Mammary epithelial cell (primary cell): ENCODE measurements at regions of chr1 and their contacts with region 1.

Region 1: DNA sequence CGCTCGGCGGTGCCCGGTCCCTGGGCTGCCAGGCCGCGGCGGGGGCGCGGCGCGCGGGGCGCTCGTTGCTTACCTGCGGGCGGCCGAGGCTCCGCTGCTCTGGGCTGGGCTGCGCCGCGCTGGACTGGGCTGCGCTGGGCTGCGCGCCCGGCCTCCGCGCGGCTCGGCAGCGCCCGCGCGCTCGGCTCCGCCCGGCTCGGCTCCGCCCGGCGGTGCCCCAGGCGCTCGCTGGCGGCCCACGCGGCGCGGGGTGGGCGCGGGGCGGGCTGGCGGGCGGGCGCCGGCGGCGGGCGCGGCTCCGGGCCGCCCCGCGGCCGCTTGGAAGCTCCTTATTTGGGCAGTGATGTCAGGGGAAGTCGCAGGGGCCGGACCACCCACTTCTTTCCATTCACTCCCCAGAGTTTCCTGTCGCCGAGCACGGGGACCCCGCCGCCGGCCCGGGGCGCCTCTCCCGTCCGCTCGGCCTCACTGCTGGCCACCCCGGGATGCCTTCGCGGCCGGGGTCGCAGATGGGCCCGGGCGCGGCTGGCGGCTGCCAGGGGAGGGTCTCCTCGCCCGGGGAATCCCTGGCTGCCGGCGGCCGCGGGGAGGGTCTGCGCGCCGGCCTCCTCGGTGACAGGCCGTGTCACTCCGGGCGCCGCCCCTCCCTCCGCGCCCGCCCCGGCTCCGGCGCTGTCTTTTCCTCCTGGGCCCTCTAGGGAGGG is 177.7 kb upstream of the EDN2 start:
- DNase-seq: peak; percentile 33
- H3K4me3 ChIP-seq: peak overlapping the region; percentile 17 to 67 (median 62)
- H3K27ac ChIP-seq: peak overlapping the region; percentile 28
- H3K4me1 ChIP-seq: peaks cover 44% of the 10 kb centered on the region
- H3K27me3 ChIP-seq: no peaks in the 10 kb centered on the region
- CTCF ChIP-seq: no peak

Region 2: GRCh38 chr1:41704196-41704595 is 42.0 kb after region 1 on chr1:
- CTCF ChIA-PET with region 1: no interaction called
- dilution Hi-C with region 1: loop called (anchors 5 kb)
- in situ Hi-C with region 1: no loop called
- intact Hi-C with region 1: no loop called
- DNase-seq: no peak
- H3K4me3 ChIP-seq: no peak overlapping the region
- H3K27ac ChIP-seq: no peak overlapping the region
- H3K4me1 ChIP-seq: no peaks in the 10 kb centered on the region
- H3K27me3 ChIP-seq: no peaks in the 10 kb centered on the region
- CTCF ChIP-seq: no peak

Region 3: GRCh38 chr1:41783189-41783639 is 121.0 kb after region 1 on chr1:
- CTCF ChIA-PET with region 1: no interaction called
- dilution Hi-C with region 1: no loop called
- in situ Hi-C with region 1: loop called in 1 of 2 experiments (anchors 25 kb)
- intact Hi-C with region 1: loop called (anchors 5 kb)
- DNase-seq: peak; percentile 92
- H3K4me3 ChIP-seq: no peak overlapping the region
- H3K27ac ChIP-seq: no peak overlapping the region
- H3K4me1 ChIP-seq: peaks cover 14% of the 10 kb centered on the region
- H3K27me3 ChIP-seq: no peaks in the 10 kb centered on the region
- CTCF ChIP-seq: no peak